Left colon (tissue), 2 donors: ENCODE measurements at regions of chr15 and their contacts with region 1.

Region 1: DNA sequence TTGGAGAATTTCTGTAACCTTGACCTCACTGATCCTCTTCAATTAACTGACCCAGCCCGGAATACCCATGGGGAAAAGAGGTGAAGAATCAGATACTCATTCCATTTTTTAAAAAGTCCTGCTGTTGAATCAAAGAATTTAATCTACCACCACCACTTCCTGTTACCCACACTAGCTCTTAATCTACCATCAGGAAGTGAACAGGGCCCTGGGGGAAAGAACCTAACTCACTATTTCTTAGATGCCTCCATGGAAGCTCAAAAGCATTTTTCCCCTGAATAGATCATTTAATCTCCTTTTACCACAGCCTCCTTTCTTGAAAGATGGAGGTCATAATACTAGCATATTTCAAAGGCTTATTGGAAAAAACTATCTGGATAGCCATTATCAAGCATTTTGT is 543.5 kb downstream of the MCTP2 start:
- DNase-seq: no peak
- ATAC-seq: no peak

Region 2: DNA sequence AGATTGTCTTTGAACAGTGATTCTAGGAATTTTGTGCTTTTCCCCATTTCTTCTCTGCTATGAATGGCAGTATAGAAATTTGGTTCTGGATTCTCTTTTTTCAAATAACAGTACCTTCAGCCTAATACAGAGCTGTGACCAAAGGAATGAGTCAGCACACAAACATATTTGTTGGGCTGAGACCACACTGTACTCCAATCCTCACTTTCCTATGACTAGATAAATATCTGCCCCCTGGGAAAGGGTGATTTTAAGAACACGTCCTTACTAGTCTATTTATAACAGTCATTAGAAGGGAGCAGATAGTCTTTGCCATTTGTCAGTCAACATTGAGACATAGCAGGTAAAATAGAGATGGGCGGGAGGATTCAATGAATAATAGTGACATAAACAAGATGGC is 82.2 kb before region 1 on chr15:
- intact Hi-C with region 1: loop called in 1 of 2 experiments (anchors 5 kb)
- DNase-seq: no peak
- ATAC-seq: no peak

Region 3: DNA sequence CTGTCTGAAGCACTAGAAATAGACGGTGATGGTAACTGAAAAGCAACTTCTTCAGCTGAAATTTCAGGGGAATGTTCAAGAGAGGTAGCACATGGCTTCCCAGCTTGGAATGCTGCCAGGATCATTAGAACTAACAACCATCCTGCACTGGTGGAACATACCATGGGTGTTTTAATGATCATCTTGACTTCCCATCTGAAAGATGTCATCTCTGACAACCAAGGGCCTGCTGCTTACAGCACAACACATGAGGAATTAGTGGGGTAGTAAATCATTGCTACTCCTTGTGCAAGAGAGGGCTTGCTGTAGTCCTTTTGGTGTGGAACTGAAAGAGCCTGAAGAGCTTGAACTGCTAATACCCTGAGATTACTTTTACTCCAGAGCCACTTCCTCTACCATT is 310.2 kb after region 1 on chr15:
- intact Hi-C with region 1: no loop called
- DNase-seq: no peak
- ATAC-seq: no peak